ENCODE measurements at regions of chr20 and their contacts with region 1.

Region 1: DNA sequence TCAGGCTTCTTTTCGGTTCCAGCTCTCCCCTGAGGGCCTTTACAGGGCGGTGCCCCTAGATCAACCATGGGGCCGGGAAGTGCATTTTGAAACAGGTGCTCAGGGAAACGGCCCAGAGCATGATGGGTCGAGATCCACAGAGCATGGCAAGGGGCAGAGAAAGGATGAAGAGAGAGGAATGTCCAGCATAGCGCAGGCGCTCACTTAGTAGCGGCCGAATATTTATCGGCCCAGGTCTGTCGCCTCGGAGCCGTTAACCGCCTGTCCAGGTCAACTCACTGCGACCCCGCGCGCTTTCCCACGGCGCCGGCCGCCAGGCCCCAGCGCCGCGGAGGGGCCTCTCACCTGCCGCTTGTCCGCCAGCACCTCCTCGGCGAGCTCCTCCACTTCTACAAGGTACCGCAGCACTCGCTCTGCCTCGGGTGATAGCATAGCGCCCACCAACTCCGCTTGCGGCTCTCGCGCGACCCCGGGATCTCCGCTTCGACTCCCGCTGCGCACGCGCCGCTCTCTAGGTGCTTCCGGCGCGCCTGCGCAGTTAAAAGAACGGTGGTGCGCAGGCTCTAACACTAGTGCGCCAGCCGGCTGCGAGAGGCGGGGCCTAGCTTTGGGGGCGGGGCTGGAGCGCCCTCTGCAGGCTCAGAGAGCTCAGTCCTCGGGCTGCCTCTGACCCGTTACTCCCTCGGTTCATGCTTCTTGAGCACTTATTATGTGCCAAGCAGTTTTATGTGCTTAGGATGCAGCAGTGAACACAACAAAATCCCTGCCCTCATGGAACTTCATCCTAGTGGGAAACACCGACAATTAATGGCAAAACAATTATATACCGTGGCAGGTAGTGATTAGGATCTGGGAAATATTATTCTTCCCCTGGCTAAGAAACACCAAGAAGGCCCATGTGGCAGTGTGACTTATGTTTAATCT is at the start of gene PDRG1:
- DNase-seq: peak; percentile 94 to 99
- H3K4me3 ChIP-seq: peak within 1 kb of the TSS; percentile 51 to 97 (median 89)
- H3K27ac ChIP-seq: peak within 1 kb of the TSS; percentile 22
- H3K4me1 ChIP-seq: peaks cover 0 to 6% (median 1%) of the 10 kb centered on the region in 4 experiments; a peak in 3 of 7 replicates
- H3K27me3 ChIP-seq: no peaks in the 10 kb centered on the region
- CTCF ChIP-seq: peak; percentile 95 to 99 (median 97)
- EP300 ChIP-seq: no peak
- POLR2A ChIP-seq: peak; percentile 77 to 91
- RAD21 ChIP-seq: peak; percentile 93 to 98
- total RNA-seq, gene PDRG1: 14.2 and 14.5 TPM in 2 replicates

Region 2: GRCh38 chr20:31861346-31862156 is 90.2 kb before region 1 on chr20:
- CTCF ChIA-PET with region 1: interaction called, 88 read pairs
- POLR2A ChIA-PET with region 1: interaction called, 5 read pairs
- DNase-seq: peak; percentile 60 to 88
- H3K4me3 ChIP-seq: peak overlapping the region; percentile 60 to 89 (median 84)
- H3K27ac ChIP-seq: peak overlapping the region; percentile 13
- H3K4me1 ChIP-seq: peaks cover 3 to 28% (median 14%) of the 10 kb centered on the region in 4 experiments
- H3K27me3 ChIP-seq: peaks cover 0 to 17% (median 14%) of the 10 kb centered on the region in 4 experiments; a peak in 5 of 7 replicates
- CTCF ChIP-seq: no peak
- EP300 ChIP-seq: no peak
- POLR2A ChIP-seq: peak in 1 of 2 experiments; percentile 21; a peak in 1 of 3 replicates
- RAD21 ChIP-seq: 0 out of 4 replicates have a peak, but pooled peaks of 1 of the 2 experiments have one; percentile 4

Region 3: DNA sequence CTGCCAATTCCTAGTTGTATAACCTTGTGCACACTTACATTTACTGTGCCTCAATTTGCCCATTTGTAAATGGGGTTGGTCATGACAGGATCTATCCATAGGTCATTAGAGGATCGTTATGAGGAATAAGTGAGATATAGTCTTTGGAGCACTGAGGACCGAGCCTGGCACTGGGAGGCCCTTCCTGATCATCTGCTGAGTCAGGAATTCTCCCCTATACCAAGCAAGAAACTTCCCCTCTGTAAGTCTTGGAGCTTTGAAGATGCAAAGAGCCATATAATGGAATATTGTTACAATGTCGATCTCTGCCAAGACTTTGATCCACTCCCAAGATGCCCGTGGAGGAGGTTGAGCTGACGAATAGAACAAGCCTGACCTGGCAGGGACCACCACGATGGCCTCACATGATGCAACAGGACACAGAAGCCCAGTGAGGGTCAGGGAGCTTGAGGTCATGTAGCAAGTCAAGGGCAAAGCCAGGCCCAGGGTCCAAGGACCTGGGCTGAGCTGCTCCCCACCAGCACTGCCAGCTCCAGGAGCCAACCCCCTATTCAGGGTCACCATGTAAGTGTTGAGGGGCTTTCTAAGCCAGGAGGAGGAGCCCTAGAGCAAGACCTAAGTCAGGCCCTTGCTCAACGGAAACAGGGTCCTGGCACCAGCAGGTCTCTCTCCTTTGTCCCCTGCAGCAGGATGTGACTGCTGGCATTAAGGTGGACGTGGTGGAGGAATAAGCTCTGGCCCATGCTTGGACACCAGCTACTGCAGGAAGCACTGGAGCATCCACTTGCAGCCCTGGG is 16.6 kb before region 1 on chr20:
- CTCF ChIA-PET with region 1: interaction called, 71 read pairs
- POLR2A ChIA-PET with region 1: interaction called, 6 read pairs
- DNase-seq: peak; percentile 50 to 65
- H3K4me3 ChIP-seq: no peak overlapping the region
- H3K27ac ChIP-seq: no peak overlapping the region
- H3K4me1 ChIP-seq: peaks cover 0 to 8% (median 4%) of the 10 kb centered on the region in 4 experiments; a peak in 6 of 7 replicates
- H3K27me3 ChIP-seq: peaks cover 2 to 12% (median 6%) of the 10 kb centered on the region in 4 experiments; a peak in 4 of 7 replicates
- CTCF ChIP-seq: peak; percentile 67 to 96 (median 77)
- EP300 ChIP-seq: no peak
- POLR2A ChIP-seq: no peak
- RAD21 ChIP-seq: peak; percentile 72 to 82

Region 4: DNA sequence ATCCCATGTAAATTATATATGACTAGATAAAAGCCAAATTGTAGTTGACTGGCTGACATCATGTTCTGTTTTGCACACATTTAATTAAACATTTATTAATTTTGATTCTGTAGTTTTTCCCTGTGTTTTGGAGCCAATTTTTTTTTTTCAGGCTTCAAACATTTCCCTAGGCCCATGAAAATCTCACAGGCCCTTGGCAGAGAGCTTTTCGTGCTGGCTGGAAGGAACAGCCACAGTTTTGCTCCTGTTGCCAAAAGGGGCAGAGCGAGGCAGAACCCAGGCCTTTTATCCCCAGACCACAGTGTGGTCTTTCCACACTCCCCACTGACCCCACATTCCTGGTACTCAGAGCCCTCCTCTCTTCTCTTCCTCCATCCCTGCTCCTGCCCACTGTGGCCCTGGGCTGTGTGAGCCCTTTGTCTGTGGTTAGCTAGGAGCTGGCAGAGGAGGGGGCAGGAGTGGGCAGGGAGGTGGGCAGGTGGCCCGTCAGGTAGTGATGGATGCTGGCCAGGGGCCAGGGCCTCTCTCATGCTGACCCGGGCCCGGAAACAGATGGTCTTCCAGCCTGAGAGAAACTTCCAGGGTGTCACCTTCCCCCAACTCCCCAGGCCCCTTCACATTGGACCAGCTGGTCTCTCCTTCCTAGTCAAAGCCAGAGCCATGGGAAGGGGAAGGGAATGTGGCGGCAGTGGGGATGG is 39.0 kb after region 1 on chr20:
- CTCF ChIA-PET with region 1: interaction called, 13 read pairs
- POLR2A ChIA-PET with region 1: no interaction called
- DNase-seq: no peak
- H3K4me3 ChIP-seq: no peak overlapping the region
- H3K27ac ChIP-seq: no peak overlapping the region
- H3K4me1 ChIP-seq: peaks cover 0 to 13% (median 8%) of the 10 kb centered on the region in 4 experiments; a peak in 4 of 7 replicates
- H3K27me3 ChIP-seq: peaks cover 2 to 34% (median 27%) of the 10 kb centered on the region in 4 experiments
- CTCF ChIP-seq: no peak
- EP300 ChIP-seq: no peak
- POLR2A ChIP-seq: no peak
- RAD21 ChIP-seq: no peak

Measured in H1 (cell line).